ENCODE measurements at regions of chr11 and their contacts with region 1.

Region 1: DNA sequence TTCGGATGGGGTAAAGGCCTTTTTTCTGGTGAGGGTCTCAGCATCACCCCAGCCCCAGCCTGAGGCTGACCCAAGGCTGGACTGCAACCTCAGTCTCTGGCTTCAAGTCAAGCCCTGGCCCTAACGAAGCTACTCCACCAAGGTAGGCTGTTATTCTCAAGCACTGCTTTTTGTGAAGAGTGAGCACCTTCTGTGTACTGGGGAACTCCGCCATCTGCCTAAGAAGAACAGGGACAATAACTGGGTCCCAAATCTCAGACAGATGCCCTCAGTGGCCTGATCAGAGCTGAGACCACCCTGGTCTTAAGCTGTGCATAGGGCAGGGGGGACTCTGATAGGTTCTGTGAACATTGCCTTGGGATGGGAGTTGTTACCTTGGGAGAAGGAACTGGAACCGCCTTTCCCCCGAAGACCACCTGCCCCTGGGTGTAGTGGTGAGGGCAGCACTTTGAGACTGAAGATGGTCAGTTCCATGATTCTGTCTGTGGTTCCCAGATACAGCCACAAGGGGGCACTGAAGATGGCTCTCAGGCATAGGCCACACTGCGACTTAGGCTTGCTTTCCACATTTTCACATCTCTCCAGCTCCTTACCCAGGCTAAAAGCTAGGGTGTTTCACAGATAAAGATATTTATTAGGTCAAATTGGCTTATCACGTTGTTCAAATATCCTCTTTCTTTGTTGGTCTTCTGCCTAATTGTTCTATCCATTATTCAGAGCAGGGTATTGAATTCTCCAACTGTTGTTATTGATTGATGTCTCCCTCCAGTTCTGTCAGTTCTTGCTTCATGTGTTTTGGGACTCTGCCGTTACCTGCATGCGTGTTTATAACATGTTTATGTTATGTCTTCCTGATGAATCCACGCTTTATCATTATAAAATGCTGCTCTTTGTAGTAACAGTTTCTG is 11.8 kb upstream of the UVRAG start:
- DNase-seq: peak; percentile 45
- H3K4me3 ChIP-seq: no peak overlapping the region
- H3K27ac ChIP-seq: no peak overlapping the region
- H3K4me1 ChIP-seq: no peaks in the 10 kb centered on the region
- H3K27me3 ChIP-seq: no peaks in the 10 kb centered on the region
- CTCF ChIP-seq: peak; percentile 90 to 92

Region 2: DNA sequence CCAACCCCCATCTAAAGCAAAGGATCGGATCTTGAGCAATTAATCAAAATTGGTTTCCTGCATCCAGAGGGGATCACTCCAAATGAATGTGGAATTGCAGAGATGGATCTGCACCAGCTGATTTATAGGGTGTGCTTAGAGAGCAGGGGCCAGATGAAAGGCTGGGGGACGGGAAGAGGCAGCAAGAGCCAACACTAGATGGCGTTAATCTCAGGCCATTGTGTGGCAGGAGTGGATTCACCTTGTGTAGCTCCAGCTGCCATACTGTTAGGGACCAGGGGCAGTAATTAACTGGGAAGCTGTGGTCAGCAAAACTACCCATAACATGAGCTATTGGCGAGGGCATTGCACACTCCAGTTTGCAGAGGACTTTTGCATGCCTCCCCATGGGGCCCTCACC is 205.5 kb before region 1 on chr11:
- CTCF ChIA-PET with region 1: no interaction called
- dilution Hi-C with region 1: no loop called
- in situ Hi-C with region 1: no loop called
- intact Hi-C with region 1: loop called (anchors 1 kb)
- DNase-seq: peak; percentile 24
- H3K4me3 ChIP-seq: no peak overlapping the region
- H3K27ac ChIP-seq: no peak overlapping the region
- H3K4me1 ChIP-seq: peaks cover under 1% of the 10 kb centered on the region
- H3K27me3 ChIP-seq: no peaks in the 10 kb centered on the region
- CTCF ChIP-seq: peak; percentile 70 to 73

Region 3: DNA sequence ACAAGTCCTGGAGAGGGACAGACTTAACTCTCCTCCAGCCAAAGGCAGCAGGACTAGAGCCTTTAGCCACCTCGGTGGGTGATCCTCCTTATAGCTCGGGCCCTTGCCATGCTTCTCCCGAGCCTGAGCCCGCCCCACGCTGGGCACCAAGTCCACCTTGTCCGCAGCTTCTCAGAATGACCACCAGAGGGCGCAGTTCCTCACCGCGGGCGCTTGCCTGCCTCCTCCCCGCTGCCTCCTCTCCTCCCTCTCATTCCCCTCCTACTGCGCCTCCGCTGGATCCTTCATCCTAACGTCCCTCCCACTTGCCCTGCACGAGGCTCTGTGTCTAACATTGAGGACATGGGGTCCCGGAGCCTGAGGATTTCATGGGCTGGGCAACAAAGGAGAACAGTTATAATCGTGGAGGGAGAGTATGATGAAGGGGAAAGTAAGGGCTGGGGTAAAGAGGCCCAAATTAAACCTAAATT is 96.9 kb before region 1 on chr11:
- CTCF ChIA-PET with region 1: no interaction called
- dilution Hi-C with region 1: no loop called
- in situ Hi-C with region 1: no loop called
- intact Hi-C with region 1: loop called (anchors 5 kb)
- DNase-seq: peak; percentile 55
- H3K4me3 ChIP-seq: no peak overlapping the region
- H3K27ac ChIP-seq: no peak overlapping the region
- H3K4me1 ChIP-seq: no peaks in the 10 kb centered on the region
- H3K27me3 ChIP-seq: no peaks in the 10 kb centered on the region
- CTCF ChIP-seq: peak; percentile 81 to 92

Region 4: DNA sequence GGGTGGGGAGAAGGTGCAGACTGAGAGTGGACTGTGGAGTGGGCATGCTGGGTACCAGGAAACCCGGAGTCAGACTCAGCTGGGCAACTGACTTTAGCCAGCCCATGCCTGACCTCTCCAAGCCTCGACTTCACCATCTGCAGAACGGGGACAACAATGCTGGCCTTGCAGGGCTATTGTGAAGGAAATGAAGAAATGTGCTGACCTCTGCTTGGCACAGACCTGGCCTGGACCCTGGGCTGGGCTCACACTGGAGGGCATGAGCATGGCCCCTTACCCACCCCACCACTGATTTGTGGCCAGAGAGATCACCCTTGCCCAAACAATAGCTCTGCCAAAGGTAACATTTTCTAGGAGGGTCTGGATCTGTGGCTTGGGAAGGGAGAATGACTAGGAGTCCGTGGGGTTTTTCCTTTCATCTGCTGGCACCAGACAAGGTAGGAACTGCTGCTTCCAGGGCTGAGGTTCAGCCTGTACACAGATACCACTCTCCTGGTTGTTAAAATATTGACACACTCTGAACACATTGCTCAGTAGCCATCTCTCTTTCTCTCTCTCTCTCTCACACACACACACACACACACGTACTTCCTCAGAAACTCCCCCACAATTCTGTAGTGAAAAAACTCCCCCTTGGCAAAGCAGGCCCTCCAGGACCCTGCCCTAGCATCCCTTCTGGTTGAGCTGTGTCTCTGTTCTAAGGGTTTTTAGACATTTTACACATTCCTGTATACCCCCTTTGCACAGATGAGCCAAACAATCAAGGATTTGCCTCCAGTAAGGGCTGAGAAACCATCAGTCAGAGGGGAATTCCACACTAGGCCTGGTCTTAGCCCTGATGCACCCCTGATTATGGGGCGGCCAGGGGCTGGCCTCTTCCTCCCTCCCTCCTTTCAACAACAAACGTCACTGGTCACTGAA is 84.5 kb before region 1 on chr11:
- CTCF ChIA-PET with region 1: no interaction called
- dilution Hi-C with region 1: no loop called
- in situ Hi-C with region 1: no loop called
- intact Hi-C with region 1: loop called (anchors 5 kb)
- DNase-seq: no peak
- H3K4me3 ChIP-seq: no peak overlapping the region
- H3K27ac ChIP-seq: no peak overlapping the region
- H3K4me1 ChIP-seq: peaks cover 4% of the 10 kb centered on the region
- H3K27me3 ChIP-seq: no peaks in the 10 kb centered on the region
- CTCF ChIP-seq: no peak

Region 5: DNA sequence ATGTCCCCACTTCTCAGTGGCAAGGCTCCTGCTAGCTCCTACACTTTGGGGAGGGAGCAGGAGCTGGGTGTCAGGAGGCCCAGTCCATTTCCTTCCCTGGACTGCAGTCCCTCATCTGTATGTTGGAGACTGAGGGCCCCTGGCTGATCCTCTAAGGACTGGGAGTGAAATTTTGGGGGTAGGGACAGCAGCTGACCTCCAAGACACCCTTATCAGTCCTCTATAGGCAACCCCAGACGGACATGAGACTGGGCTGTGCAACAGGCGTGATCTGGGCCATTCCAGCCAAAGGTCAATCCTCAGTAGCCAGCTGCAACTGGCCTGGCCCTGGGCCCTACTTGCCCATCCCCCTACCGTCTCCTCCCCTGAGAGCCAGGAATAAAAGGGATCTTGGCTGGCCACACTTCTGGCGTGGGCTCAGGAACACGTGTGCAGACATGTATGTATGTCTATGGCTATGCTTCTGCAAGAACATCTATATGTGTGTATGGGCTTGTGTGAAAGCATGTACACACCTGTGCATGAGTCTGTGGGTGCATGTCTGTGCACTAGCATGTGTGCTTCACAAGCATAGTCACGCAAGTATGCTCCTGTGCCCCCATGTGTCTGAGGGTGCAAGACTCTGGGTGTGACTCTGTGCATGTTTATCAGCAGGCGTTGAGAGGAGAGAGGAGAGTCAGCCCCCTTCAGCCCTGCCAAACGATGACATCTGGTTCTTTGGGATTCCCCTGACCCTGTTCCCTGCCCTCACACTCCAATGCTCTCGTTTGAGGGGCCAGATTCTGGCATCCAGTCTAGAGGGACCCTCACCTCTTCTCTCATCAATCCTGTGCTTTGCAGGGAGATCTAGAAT is 59.2 kb before region 1 on chr11:
- CTCF ChIA-PET with region 1: no interaction called
- dilution Hi-C with region 1: no loop called
- in situ Hi-C with region 1: loop called in 1 of 2 experiments (anchors 5 kb)
- intact Hi-C with region 1: no loop called
- DNase-seq: no peak
- H3K4me3 ChIP-seq: no peak overlapping the region
- H3K27ac ChIP-seq: no peak overlapping the region
- H3K4me1 ChIP-seq: no peaks in the 10 kb centered on the region
- H3K27me3 ChIP-seq: peaks cover 8% of the 10 kb centered on the region
- CTCF ChIP-seq: no peak

Region 6: DNA sequence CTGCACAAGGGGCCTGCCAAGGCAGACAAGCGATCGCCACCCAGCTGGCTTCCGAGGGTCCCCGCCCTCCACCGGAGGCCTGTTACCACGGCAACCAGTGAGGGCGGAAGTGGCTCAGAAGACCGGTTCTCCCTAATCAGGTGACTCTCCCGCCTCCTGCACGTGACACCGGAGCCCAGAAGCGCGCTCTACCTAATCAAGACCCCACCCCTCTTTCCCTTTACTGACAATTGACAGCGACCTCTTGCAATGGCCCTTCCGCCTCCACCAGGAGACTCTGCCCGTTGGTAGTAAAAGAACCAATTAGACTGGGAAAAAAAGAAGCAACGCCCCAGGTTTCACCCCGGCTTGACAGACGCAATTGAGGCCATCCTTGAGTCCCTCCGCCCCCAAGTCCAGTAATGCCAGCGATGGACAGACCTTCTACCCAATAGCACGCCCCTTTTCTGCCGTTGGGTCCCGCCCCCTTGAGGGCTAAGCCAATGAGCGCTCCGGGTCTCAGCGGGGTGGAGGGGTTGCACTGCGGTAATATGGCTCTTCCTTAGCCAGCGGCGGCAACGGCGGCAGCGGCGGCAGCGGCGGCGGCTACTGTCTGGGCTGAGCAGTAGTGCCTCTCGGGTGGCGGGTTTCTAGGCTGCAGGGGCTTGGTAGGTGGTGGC is 11.6 kb after region 1 on chr11 and contains the start of gene UVRAG:
- CTCF ChIA-PET with region 1: no interaction called
- dilution Hi-C with region 1: no loop called
- in situ Hi-C with region 1: no loop called
- intact Hi-C with region 1: loop called (anchors 1 kb)
- DNase-seq: peak; percentile 100
- H3K4me3 ChIP-seq: peak within 1 kb of the TSS; percentile 81 to 86 (median 82)
- H3K27ac ChIP-seq: peak within 1 kb of the TSS; percentile 87
- H3K4me1 ChIP-seq: peaks cover 27% of the 10 kb centered on the region
- H3K27me3 ChIP-seq: no peaks in the 10 kb centered on the region
- CTCF ChIP-seq: peak in 1 of 2 donors; percentile 22
- total RNA-seq, gene UVRAG: 17.5 to 20.4 TPM

Region 7: DNA sequence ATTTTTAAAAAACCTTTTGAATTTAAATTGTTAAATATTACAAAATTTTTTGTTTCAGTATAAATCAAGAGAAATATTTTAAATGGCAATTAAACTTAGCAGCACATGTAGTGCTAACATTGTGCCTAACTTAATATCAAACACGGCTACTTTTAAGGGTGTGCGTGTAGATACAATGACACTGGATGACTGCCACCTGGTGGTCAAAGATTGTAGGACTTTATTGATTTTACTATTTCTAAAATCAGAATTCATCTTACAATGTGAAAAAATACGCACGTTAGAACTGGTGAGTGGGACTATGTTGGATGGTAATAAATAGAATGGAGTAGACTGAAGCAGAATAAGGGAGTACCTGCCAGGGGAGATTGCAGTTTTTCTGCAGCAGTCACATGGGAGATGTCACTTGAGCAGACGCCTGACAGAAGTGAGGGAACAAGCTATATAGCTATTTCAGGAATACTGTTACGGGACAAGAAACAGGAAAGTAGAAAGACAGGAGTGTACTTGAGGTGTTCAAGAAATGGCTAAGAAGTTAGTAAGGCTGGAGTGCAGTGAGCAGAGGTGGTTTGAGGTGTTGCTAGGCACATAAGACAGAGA is 64.7 kb after region 1 on chr11:
- CTCF ChIA-PET with region 1: interaction called, 3 read pairs
- dilution Hi-C with region 1: loop called (anchors 5 kb)
- in situ Hi-C with region 1: loop called in 1 of 2 experiments (anchors 5 kb)
- intact Hi-C with region 1: loop called (anchors 1 kb)
- DNase-seq: peak; percentile 11
- H3K4me3 ChIP-seq: no peak overlapping the region
- H3K27ac ChIP-seq: no peak overlapping the region
- H3K4me1 ChIP-seq: no peaks in the 10 kb centered on the region
- H3K27me3 ChIP-seq: no peaks in the 10 kb centered on the region
- CTCF ChIP-seq: peak; percentile 67 to 72

Region 8: DNA sequence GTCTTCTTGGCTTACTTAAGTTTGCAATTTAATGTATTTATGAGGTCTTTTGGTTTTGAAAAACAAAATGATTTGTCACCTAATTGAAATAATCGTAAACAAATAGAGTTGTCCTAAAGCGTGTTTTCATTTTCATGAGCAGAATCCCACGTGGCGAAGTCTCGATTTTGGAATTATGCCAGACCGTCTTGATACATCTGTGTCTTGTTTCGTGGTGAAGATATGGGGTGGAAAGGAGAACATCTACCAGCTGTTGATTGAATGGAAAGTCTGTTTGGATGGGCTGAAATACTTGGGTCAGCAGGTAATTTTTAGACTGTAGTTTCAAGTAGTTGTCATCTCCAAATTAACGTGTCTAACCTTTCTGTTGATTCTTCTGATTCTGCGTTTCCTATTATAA is 76.6 kb after region 1 on chr11:
- CTCF ChIA-PET with region 1: no interaction called
- dilution Hi-C with region 1: no loop called
- in situ Hi-C with region 1: no loop called
- intact Hi-C with region 1: no loop called
- DNase-seq: no peak
- H3K4me3 ChIP-seq: no peak overlapping the region
- H3K27ac ChIP-seq: no peak overlapping the region
- H3K4me1 ChIP-seq: no peaks in the 10 kb centered on the region
- H3K27me3 ChIP-seq: no peaks in the 10 kb centered on the region
- CTCF ChIP-seq: no peak

Region 9: DNA sequence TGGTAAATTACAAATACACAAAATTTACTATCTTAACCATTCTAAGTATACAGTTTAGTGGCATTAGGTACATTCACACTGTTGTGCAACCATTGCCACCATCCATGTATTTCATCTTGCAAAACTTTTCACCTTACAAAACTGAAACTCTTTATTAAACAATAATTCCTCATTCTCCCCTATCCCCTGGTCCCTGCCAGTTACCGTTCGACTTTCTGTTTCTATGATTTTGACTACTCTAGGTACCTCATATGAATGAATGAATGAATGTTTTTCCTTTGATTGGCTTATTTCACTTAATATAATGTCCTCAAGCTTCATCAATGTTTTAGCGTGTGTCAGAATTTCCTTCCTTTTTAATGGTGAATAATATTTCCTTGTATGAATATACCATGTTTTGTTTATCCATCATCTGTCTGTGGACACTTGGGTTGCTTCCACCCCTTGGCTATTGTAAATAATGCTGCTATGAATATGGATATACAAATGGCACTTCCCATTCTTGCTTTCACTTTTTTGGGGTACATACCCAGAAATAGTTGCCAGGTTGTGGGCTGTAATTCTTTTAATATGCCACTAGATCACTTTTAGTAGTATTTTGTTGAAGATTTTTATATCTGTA is 104.8 kb after region 1 on chr11:
- CTCF ChIA-PET with region 1: no interaction called
- dilution Hi-C with region 1: no loop called
- in situ Hi-C with region 1: no loop called
- intact Hi-C with region 1: no loop called
- DNase-seq: no peak
- H3K4me3 ChIP-seq: no peak overlapping the region
- H3K27ac ChIP-seq: no peak overlapping the region
- H3K4me1 ChIP-seq: no peaks in the 10 kb centered on the region
- H3K27me3 ChIP-seq: no peaks in the 10 kb centered on the region
- CTCF ChIP-seq: no peak

Measured in mammary epithelial cell (primary cell).